RWPE1 (cell line): ENCODE measurements at regions of chr13 and their contacts with region 1.

Region 1: DNA sequence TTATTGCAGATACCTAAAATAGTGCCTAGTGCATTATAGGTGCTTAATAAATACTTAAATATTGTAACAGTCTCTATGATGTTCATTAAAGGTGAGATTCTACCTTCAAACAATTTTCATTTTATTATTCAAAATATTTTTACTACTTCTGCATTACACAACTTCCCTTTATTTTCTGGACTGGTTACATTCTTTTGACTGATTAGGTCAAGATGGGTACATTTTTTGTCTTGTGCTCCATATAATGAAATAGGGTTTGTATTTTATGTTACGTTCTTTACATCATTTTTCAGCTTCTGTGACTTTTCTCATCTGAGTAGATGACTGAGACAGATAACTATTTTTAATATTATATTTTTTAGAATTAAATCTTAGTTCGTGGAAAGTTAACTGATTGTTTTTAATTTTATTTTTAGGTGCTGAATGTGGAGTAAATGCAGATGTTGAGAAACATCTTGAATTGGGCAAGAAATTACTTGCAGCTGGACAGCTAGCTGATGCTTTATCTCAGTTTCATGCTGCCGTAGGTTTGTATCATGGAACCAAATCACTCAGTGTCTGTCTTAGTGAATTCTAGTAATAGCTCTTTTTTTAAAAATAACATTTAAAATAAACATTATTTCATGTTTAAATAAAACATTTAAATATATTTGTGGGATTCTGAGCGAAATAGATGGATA is 32.0 kb downstream of the DNAJC3 start:
- DNase-seq: no peak
- H3K27ac ChIP-seq: no peak overlapping the region
- CTCF ChIP-seq: no peak

Region 2: DNA sequence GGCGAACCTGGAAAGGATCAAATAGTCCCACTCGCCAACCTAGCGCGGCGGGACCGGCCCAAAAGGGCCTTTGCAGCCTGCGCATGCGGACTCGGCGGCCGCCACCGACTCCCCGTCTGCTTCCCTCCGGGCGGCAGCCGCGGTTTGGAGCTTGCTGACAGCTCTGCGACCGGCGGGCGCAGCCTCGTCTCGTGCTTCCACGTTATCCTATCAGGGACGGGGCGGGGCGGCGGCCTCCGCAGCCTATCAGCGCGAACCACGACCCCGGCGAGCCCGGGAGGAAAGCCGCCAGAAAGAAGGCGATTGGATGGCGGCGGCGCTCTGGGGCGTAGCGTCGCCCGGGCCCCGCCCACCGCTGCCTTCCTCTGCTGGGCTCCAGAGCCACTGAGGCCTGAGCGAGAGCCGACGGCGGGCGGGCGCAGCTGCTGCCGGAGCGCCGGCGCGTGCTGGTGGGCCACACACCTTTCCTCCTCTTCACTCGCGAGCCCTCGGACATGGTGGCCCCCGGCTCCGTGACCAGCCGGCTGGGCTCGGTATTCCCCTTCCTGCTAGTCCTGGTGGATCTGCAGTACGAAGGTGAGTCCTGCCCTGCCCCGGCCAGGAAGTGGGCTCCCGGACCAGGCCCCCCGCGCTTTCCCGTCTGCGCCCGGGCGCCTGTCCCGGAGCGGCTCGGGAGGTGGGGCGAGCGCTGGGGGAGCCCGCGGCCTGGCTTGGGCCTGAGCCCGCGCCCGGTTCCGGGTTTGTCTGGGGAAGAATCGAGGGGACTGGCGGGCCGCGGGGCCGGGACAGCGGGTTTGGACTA is 32.0 kb before region 1 on chr13 and contains the start of gene DNAJC3:
- CTCF ChIA-PET with region 1: no interaction called
- POLR2A ChIA-PET with region 1: interaction called, 11 read pairs
- DNase-seq: peak; percentile 99
- H3K27ac ChIP-seq: peak within 1 kb of the TSS; percentile 97
- CTCF ChIP-seq: no peak